ENCODE measurements at regions of chr2 and their contacts with region 1.

Region 1: GRCh38 chr2:119721462-119721861 is 38.3 kb upstream of the PTPN4 start:
- H3K4me3 ChIP-seq: no peak overlapping the region
- H3K27ac ChIP-seq: no peak overlapping the region
- H3K4me1 ChIP-seq: no peaks in the 10 kb centered on the region
- CTCF ChIP-seq: no peak

Region 2: DNA sequence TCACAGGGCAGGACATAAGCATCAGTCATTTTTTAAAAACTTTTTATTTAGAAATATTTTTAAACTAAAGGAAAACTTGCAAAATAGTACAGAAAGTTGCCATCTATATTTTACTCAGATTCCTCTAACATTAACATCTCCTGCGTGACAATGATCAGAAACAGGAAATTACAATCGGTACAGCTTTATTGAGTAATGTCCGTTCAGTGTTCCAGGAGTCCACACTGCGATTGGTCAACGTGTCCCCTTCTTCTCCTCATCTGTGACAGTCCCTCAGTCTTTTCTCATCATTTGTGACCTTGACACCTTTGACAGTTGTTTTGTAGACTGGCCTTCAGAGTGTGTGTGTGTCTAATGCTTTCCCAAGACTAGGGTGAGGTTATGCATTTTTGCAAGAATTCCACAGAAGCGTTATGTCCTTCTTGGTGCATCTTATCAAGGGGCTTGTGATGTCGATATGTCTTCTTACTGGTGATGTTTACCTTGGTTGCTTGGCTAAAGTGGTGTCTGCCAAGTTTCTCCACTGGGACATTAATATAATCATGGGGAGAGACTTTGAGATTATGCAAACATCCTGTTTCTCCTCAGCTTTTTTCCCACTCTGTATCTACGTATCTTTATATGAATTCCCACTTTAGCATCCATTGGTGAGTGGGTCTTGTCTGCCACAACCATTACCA is 63.9 kb before region 1 on chr2:
- CTCF ChIA-PET with region 1: no interaction called
- POLR2A ChIA-PET with region 1: no interaction called
- H3K4me3 ChIP-seq: no peak overlapping the region
- H3K27ac ChIP-seq: no peak overlapping the region
- H3K4me1 ChIP-seq: no peaks in the 10 kb centered on the region
- CTCF ChIP-seq: no peak

Region 3: GRCh38 chr2:119668546-119668945 is 52.9 kb before region 1 on chr2:
- CTCF ChIA-PET with region 1: interaction called, 10 read pairs
- POLR2A ChIA-PET with region 1: no interaction called
- H3K4me3 ChIP-seq: no peak overlapping the region
- H3K27ac ChIP-seq: no peak overlapping the region
- H3K4me1 ChIP-seq: no peaks in the 10 kb centered on the region
- CTCF ChIP-seq: no peak

Region 4: GRCh38 chr2:119801040-119801439 is 79.6 kb after region 1 on chr2:
- CTCF ChIA-PET with region 1: no interaction called
- POLR2A ChIA-PET with region 1: no interaction called
- H3K4me3 ChIP-seq: no peak overlapping the region
- H3K27ac ChIP-seq: no peak overlapping the region
- H3K4me1 ChIP-seq: no peaks in the 10 kb centered on the region
- CTCF ChIP-seq: no peak

Measured in HEK293 (cell line).